Activated CD4-positive, alpha-beta T cell treated with anti-CD3 and anti-CD28 coated beads for 36 hours (primary cell): ENCODE measurements at regions of chr5 and their contacts with region 1.

Region 1: GRCh38 chr5:98905857-98906690 is 22.7 kb downstream of the CHD1 start:
- DNase-seq: no peak
- ATAC-seq: no peak
- H3K4me3 Mint-ChIP-seq: no peak overlapping the region
- H3K27ac Mint-ChIP-seq: peak overlapping the region; percentile 12
- H3K4me1 Mint-ChIP-seq: peaks cover 56% of the 10 kb centered on the region
- H3K27me3 Mint-ChIP-seq: no peaks in the 10 kb centered on the region

Region 2: GRCh38 chr5:98865690-98866089 is 40.4 kb before region 1 on chr5:
- CTCF ChIA-PET with region 1: interaction called, 4 read pairs
- POLR2A ChIA-PET with region 1: no interaction called
- intact Hi-C with region 1: loop called in 1 of 2 experiments (anchors 5 kb)
- DNase-seq: no peak
- ATAC-seq: no peak
- H3K4me3 Mint-ChIP-seq: no peak overlapping the region
- H3K27ac Mint-ChIP-seq: no peak overlapping the region
- H3K4me1 Mint-ChIP-seq: no peaks in the 10 kb centered on the region
- H3K27me3 Mint-ChIP-seq: no peaks in the 10 kb centered on the region

Region 3: GRCh38 chr5:98923966-98924365 is 17.9 kb after region 1 on chr5:
- CTCF ChIA-PET with region 1: interaction called, 12 read pairs
- POLR2A ChIA-PET with region 1: interaction called, 3 read pairs
- intact Hi-C with region 1: loop called (anchors 1 to 2 kb)
- DNase-seq: peak; percentile 36
- ATAC-seq: no peak
- H3K4me3 Mint-ChIP-seq: no peak overlapping the region
- H3K27ac Mint-ChIP-seq: peak overlapping the region; percentile 63
- H3K4me1 Mint-ChIP-seq: peaks cover 61% of the 10 kb centered on the region
- H3K27me3 Mint-ChIP-seq: no peaks in the 10 kb centered on the region

Region 4: GRCh38 chr5:98928873-98929696 is 23.0 kb after region 1 on chr5 and contains the start of gene CHD1:
- CTCF ChIA-PET with region 1: interaction called, 4 read pairs
- POLR2A ChIA-PET with region 1: interaction called, 3 read pairs
- intact Hi-C with region 1: loop called (anchors 1 to 2 kb)
- DNase-seq: peak; percentile 97
- ATAC-seq: peak; percentile 57
- H3K4me3 Mint-ChIP-seq: peak within 1 kb of the TSS; percentile 93
- H3K27ac Mint-ChIP-seq: peak within 1 kb of the TSS; percentile 99
- H3K4me1 Mint-ChIP-seq: peaks cover 56% of the 10 kb centered on the region
- H3K27me3 Mint-ChIP-seq: no peaks in the 10 kb centered on the region
- total RNA-seq, gene CHD1: 50.8 to 75.5 TPM

Region 5: DNA sequence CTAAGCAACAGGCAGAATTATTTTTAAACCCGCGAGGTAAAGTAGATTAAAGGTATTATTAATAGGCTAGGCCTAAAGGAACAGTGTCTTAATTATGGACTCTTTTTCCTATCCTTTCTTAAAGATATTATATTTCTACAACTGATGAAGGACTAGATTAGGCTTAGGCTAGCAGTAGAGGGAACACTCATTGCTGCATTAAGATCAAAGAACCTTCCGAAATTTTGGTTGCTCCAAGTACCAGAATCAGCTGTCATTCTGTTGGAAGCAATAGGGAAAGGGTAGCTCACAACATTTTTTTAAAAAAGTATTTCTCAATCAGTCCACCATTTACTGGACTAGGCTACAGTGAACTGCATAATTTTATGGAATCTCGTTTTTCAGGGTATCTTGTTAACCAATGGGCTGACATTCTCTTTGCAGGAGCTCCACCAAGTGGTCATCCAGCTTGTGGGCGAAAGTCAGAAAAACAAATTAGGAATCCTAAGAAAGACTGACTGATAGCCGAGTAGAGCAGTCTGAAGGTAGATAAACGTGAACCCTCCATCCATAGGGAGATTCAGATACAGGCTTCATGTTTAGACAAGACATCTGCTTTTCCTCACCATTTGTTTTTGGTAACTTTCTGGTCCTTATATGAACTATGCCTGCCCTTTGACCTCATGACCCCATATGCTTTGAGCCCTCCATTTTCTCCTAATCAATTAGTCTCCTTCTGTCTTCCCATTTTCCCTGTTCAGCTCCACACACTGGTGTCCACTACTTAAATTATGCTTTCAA is 126.3 kb after region 1 on chr5:
- CTCF ChIA-PET with region 1: interaction called, 6 read pairs
- POLR2A ChIA-PET with region 1: no interaction called
- intact Hi-C with region 1: loop called (anchors 1 kb)
- DNase-seq: peak; percentile 58
- ATAC-seq: peak; percentile 22
- H3K4me3 Mint-ChIP-seq: peak overlapping the region; percentile 69
- H3K27ac Mint-ChIP-seq: peak overlapping the region; percentile 87
- H3K4me1 Mint-ChIP-seq: peaks cover 69% of the 10 kb centered on the region
- H3K27me3 Mint-ChIP-seq: no peaks in the 10 kb centered on the region

Region 6: GRCh38 chr5:99060306-99061261 is 154.5 kb after region 1 on chr5:
- CTCF ChIA-PET with region 1: interaction called, 49 read pairs
- POLR2A ChIA-PET with region 1: no interaction called
- intact Hi-C with region 1: loop called (anchors 1 kb)
- DNase-seq: peak; percentile 91
- ATAC-seq: peak; percentile 60
- H3K4me3 Mint-ChIP-seq: no peak overlapping the region
- H3K27ac Mint-ChIP-seq: no peak overlapping the region
- H3K4me1 Mint-ChIP-seq: peaks cover 6% of the 10 kb centered on the region
- H3K27me3 Mint-ChIP-seq: peaks cover 9% of the 10 kb centered on the region